Activated CD4-positive, alpha-beta T cell treated with anti-CD3 and anti-CD28 coated beads for 36 hours (primary cell): ENCODE measurements at regions of chr6 and their contacts with region 1.

Region 1: DNA sequence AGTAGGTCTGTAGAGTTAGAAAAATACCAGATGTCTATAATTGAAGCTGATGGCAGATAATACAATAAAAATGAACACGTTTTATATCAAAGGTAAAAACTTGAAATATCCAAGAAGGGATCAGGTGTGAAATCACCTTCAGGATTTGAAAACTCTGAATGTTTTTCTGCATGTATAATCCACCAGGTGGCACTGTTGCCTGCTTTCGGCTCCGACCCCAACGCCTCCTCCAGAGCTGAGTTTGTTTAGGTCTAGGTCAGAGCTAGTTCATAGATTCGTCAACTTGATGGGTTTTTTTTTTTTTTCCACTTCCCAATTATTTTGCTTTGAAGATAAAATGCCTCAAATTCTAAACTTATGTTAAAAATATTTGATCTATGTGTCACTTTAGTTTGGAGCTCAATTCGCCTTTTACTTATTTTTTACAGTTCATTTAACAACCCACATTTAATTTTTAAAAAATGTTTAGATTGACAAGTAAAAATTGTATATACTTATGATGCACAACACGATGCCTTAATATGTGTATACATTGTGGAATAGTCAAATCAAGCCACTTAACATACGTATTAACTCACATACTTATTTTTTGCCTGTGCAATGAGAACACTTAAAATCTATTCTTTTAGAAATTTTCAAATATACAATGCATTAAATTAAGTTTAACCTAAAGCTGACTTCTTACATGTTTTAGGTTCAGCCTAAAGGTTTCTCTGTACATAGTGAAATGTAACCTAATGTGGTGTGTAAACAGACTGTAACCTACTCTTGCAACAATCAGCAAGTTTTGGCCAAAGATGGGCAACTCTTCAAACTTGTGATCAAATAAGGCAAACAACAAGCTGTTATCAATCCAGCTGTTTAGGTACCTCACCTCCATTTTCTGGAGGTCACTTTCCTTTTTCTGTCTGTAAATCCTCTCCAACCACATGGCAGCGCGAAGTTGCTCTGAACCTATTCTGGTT is 39.4 kb upstream of the ENPP4 start:
- DNase-seq: peak; percentile 76
- ATAC-seq: peak; percentile 58
- H3K4me3 Mint-ChIP-seq: no peak overlapping the region
- H3K27ac Mint-ChIP-seq: no peak overlapping the region
- H3K4me1 Mint-ChIP-seq: peaks cover 4% of the 10 kb centered on the region
- H3K27me3 Mint-ChIP-seq: peaks cover 33% of the 10 kb centered on the region

Region 2: GRCh38 chr6:46042355-46042999 is 47.9 kb before region 1 on chr6:
- CTCF ChIA-PET with region 1: interaction called, 12 read pairs
- POLR2A ChIA-PET with region 1: no interaction called
- intact Hi-C with region 1: no loop called
- DNase-seq: peak; percentile 18
- ATAC-seq: peak; percentile 80
- H3K4me3 Mint-ChIP-seq: no peak overlapping the region
- H3K27ac Mint-ChIP-seq: no peak overlapping the region
- H3K4me1 Mint-ChIP-seq: peaks cover 10% of the 10 kb centered on the region
- H3K27me3 Mint-ChIP-seq: no peaks in the 10 kb centered on the region

Region 3: GRCh38 chr6:46105568-46105967 is 15.2 kb after region 1 on chr6:
- CTCF ChIA-PET with region 1: interaction called, 13 read pairs
- POLR2A ChIA-PET with region 1: no interaction called
- intact Hi-C with region 1: no loop called
- DNase-seq: no peak
- ATAC-seq: no peak
- H3K4me3 Mint-ChIP-seq: no peak overlapping the region
- H3K27ac Mint-ChIP-seq: no peak overlapping the region
- H3K4me1 Mint-ChIP-seq: peaks cover 22% of the 10 kb centered on the region
- H3K27me3 Mint-ChIP-seq: no peaks in the 10 kb centered on the region

Region 4: GRCh38 chr6:46221222-46221793 is 130.9 kb after region 1 on chr6:
- CTCF ChIA-PET with region 1: interaction called, 10 read pairs
- POLR2A ChIA-PET with region 1: no interaction called
- intact Hi-C with region 1: loop called (anchors 1 kb)
- DNase-seq: peak; percentile 11
- ATAC-seq: peak; percentile 57
- H3K4me3 Mint-ChIP-seq: no peak overlapping the region
- H3K27ac Mint-ChIP-seq: peak overlapping the region; percentile 67
- H3K4me1 Mint-ChIP-seq: peaks cover 26% of the 10 kb centered on the region
- H3K27me3 Mint-ChIP-seq: peaks cover 8% of the 10 kb centered on the region

Region 5: DNA sequence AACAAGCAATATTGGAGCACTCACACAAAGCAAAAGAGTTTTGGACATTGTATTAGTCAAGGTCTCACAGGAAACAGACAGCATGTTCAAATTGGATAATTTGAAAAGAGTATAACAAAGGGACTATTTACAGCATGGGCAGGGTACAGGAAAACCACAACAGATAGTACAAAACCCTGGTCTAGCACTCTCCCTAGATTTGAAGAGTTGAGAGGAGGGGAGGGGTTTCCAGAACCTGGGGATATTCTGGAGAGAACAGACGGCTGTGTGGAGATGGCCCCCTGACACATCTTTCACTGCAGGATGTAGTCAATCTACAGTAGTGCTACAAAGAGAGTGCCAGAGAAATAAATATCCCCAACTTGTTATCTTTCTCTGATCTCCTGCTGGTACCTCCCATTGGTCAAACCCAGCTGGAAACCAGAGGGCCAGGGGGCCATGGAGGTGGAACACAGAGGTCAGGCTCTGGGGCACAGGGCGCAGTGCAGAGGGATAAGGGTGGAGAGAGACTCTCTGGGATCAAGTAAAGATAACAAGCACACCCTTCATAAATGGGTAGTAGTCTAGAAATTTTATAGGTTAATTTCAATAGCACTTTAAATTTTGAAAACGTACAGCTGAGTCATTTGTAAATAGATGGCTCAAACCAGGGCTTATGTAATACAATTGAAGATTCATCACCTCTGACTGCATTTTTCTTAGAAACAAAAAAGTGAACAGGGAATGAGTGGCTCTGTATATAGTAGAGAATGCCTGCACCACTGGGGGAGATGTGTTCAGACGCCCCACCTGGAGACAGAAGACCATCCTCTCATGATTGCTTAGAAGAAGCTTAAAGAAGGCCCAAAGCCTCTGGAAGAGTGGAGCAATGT is 375.1 kb after region 1 on chr6:
- CTCF ChIA-PET with region 1: no interaction called
- POLR2A ChIA-PET with region 1: no interaction called
- intact Hi-C with region 1: no loop called
- DNase-seq: no peak
- ATAC-seq: no peak
- H3K4me3 Mint-ChIP-seq: no peak overlapping the region
- H3K27ac Mint-ChIP-seq: no peak overlapping the region
- H3K4me1 Mint-ChIP-seq: no peaks in the 10 kb centered on the region
- H3K27me3 Mint-ChIP-seq: peaks cover 6% of the 10 kb centered on the region

Region 6: DNA sequence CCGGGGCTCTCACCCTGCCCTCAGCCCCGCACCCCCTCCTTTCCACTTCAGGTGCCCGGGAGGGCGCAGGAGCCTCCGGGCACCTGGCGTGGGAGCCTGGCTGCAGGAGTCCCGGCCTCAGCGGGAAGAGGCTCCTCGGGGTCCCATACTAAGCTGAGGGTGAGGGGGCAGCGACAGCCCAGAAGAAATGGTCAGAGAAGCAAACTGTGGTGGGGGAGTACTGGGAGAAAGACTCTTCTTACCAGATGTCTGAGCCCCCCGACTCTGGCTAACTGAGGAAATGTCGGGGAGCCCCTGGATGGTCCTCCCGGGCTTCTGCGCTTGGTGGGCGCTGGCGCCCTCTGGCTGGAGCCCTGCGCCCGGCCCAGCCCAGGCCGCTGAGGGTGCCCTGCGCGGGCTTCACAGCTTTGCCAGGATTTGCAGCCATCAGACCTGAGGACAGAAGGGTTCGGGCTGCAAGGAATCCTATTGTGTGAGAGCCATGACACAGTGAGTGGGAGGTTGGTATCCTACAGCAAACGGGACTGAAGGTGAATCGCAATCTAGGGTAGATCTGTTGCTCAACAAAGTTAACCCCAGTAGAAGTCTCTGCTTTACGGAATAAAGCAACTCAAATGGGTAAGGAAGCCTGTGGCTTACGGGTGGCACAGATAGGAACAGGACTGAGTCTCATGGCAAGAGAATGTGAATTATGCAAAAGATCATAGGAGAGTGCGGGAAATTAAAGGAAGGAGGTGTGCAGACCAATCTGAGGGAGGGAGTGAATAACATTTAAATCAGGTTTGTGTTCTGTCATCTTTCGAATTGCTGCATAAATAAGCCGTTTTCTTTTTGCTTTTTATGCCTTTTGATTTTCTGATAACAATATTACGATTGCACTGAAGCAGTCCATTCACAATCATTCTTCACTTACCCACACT is 401.5 kb after region 1 on chr6:
- CTCF ChIA-PET with region 1: no interaction called
- POLR2A ChIA-PET with region 1: no interaction called
- intact Hi-C with region 1: loop called in 1 of 2 experiments (anchors 10 kb)
- DNase-seq: peak; percentile 29
- ATAC-seq: peak; percentile 47
- H3K4me3 Mint-ChIP-seq: peak overlapping the region; percentile 10
- H3K27ac Mint-ChIP-seq: no peak overlapping the region
- H3K4me1 Mint-ChIP-seq: peaks cover 3% of the 10 kb centered on the region
- H3K27me3 Mint-ChIP-seq: peaks cover 58% of the 10 kb centered on the region

Region 7: DNA sequence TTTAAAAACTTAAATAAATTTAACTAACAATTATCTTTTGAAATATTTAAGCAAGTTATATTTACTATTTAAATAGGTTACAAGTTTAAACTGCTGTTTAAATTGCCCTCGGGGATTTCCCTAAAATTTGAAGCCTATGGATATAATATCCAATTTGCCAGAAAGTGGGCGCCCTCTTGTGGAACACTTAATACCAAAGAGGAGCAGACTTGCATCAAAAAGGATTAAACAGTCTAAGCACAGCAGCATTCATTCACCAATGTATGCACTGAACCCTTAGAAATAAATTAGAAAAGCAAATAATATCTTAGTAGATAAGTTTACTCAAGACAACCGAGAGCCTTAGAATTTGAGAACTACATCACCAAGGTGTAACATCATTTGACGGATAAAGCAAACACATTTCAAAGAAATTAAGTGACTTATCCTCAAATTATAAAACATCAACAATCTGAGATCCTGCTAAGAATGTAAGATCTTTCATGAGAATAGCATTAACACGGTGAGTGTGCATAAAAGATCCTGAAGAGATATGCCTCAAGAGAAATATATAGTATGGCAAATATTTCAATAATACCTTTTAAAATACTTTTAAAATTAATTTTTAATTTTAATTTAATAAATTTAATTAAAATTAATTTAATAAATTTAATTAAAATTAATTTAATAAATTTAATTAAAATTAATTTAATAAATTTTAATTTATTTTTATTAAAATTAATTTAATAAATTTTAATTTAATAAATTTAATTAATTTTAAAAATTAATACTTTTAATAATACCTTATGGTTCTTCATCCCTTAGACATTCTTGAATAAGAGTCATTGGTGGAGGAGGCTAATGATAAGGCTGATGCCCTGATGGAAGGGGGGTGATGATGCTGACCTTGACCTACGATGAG is 691.3 kb after region 1 on chr6:
- CTCF ChIA-PET with region 1: no interaction called
- POLR2A ChIA-PET with region 1: no interaction called
- intact Hi-C with region 1: loop called (anchors 2 to 5 kb)
- DNase-seq: peak; percentile 61
- ATAC-seq: peak; percentile 19
- H3K4me3 Mint-ChIP-seq: no peak overlapping the region
- H3K27ac Mint-ChIP-seq: no peak overlapping the region
- H3K4me1 Mint-ChIP-seq: no peaks in the 10 kb centered on the region
- H3K27me3 Mint-ChIP-seq: peaks cover 6% of the 10 kb centered on the region